ENCODE measurements at regions of chr18 and their contacts with region 1.

Region 1: GRCh38 chr18:36025025-36025424 is 42.3 kb downstream of the RPRD1A start:
- DNase-seq: no peak
- ATAC-seq: no peak
- H3K4me3 ChIP-seq: no peak overlapping the region
- H3K4me3 Mint-ChIP-seq: no peak overlapping the region
- H3K27ac ChIP-seq: no peak overlapping the region
- H3K27ac Mint-ChIP-seq: peak overlapping the region; percentile 8 to 22
- H3K4me1 ChIP-seq: peaks cover 0 to 8% of the 10 kb centered on the region in 2 experiments
- H3K4me1 Mint-ChIP-seq: peaks cover 15 to 20% (median 15%) of the 10 kb centered on the region in 3 donors
- H3K27me3 ChIP-seq: no peaks in the 10 kb centered on the region
- H3K27me3 Mint-ChIP-seq: no peaks in the 10 kb centered on the region

Region 2: DNA sequence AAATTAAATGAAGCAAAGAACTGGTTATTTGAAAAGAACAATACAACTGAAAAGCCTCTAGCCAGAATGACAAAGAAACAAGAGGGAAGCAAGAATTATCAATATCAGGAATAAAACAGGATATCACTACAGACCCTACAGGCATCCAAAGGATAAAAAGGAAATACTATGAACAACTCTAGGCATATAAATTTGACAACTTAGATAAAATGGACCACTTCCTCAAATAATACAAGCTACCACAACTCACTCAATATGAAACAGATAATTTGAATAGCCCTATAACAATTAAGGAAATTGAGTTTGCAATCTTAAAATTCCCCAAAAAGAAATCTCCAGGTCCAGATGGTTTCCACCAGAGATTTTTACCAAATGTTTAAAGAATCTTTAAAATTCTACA is 22.5 kb after region 1 on chr18:
- CTCF ChIA-PET with region 1: interaction called in 1 of 2 experiments, 13 read pairs
- POLR2A ChIA-PET with region 1: interaction called in 1 of 2 experiments, 10 read pairs
- DNase-seq: no peak
- ATAC-seq: no peak
- H3K4me3 ChIP-seq: no peak overlapping the region
- H3K4me3 Mint-ChIP-seq: no peak overlapping the region
- H3K27ac ChIP-seq: no peak overlapping the region
- H3K27ac Mint-ChIP-seq: no peak overlapping the region
- H3K4me1 ChIP-seq: peaks cover 2 to 3% of the 10 kb centered on the region in 2 experiments
- H3K4me1 Mint-ChIP-seq: peaks cover 52 to 56% (median 54%) of the 10 kb centered on the region in 3 donors
- H3K27me3 ChIP-seq: no peaks in the 10 kb centered on the region
- H3K27me3 Mint-ChIP-seq: no peaks in the 10 kb centered on the region

Region 3: GRCh38 chr18:36176710-36177109 is 151.7 kb after region 1 on chr18:
- CTCF ChIA-PET with region 1: no interaction called
- POLR2A ChIA-PET with region 1: no interaction called
- DNase-seq: no peak
- ATAC-seq: no peak
- H3K4me3 ChIP-seq: no peak overlapping the region
- H3K4me3 Mint-ChIP-seq: no peak overlapping the region
- H3K27ac ChIP-seq: no peak overlapping the region
- H3K27ac Mint-ChIP-seq: no peak overlapping the region
- H3K4me1 ChIP-seq: no peaks in the 10 kb centered on the region
- H3K4me1 Mint-ChIP-seq: peaks cover 6 to 21% (median 14%) of the 10 kb centered on the region in 3 donors
- H3K27me3 ChIP-seq: no peaks in the 10 kb centered on the region
- H3K27me3 Mint-ChIP-seq: no peaks in the 10 kb centered on the region